ENCODE measurements at regions of chr2 and their contacts with region 1.

Region 1: GRCh38 chr2:185279999-185280398 is 458.6 kb upstream of the FSIP2 start:
- DNase-seq: no peak
- H3K4me3 Mint-ChIP-seq: no peak overlapping the region
- H3K27ac Mint-ChIP-seq: no peak overlapping the region
- H3K4me1 Mint-ChIP-seq: peaks cover 26% of the 10 kb centered on the region
- H3K27me3 Mint-ChIP-seq: no peaks in the 10 kb centered on the region
- CTCF ChIP-seq: peak; percentile 45

Region 2: DNA sequence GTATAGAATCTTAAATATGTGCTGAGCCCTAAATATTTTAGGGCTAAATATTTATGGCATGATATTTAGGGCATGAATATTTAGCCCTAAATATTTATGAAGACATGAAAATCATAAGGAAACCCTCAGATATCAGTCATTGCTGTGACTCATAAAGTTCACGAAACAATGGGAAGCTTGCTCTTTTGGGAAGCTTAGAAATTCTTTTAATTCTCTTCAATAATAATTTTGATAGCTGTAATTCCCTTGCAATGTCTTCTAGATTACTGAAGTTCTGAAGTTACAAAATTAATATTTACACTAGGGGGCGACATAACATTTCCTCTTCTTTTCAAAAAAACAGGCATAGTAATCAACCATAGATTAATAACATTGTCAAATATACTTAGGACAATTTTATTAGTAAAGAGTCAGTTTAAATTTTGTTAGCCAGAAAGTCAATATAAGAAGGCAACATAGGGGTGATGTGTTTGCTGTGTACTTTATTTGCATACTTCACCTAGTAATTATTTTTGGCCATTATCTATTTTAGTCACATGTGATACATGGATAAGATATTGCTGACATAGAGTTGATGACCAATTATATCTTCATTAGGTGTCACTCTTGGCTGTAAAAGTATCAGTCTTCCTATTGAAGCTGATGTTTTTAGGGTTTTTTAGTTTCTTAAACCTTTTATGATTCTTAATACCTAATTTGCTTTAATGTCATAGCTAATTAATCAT is 668.5 kb before region 1 on chr2:
- CTCF ChIA-PET with region 1: no interaction called
- intact Hi-C with region 1: loop called (anchors 1 kb)
- DNase-seq: no peak
- H3K4me3 Mint-ChIP-seq: no peak overlapping the region
- H3K27ac Mint-ChIP-seq: no peak overlapping the region
- H3K4me1 Mint-ChIP-seq: no peaks in the 10 kb centered on the region
- H3K27me3 Mint-ChIP-seq: no peaks in the 10 kb centered on the region
- CTCF ChIP-seq: peak; percentile 54

Region 3: GRCh38 chr2:184646177-184646576 is 633.8 kb before region 1 on chr2:
- CTCF ChIA-PET with region 1: no interaction called
- intact Hi-C with region 1: loop called (anchors 10 kb)
- DNase-seq: peak; percentile 74
- H3K4me3 Mint-ChIP-seq: peak overlapping the region; percentile 46
- H3K27ac Mint-ChIP-seq: peak overlapping the region; percentile 56
- H3K4me1 Mint-ChIP-seq: peaks cover 33% of the 10 kb centered on the region
- H3K27me3 Mint-ChIP-seq: no peaks in the 10 kb centered on the region
- CTCF ChIP-seq: no peak

Region 4: DNA sequence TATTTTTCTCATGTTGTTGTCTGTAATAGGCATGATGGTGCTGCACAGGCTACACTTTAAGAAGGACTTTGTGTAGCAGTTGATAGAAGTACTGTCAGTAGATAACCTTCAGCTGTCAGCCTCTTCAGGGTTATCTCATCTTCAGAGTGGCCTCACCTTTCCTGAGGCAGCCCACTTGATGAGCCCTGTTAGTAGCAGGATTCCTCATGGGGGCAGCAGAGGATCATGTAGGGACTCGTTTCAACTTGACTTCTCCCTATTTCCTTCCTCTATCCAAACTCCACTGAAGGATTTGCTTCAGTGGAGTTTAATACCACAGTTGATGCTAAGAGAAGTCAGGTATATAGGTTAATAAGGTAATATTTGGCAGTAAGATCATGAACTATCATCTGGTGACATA is 71.7 kb before region 1 on chr2:
- CTCF ChIA-PET with region 1: interaction called, 6 read pairs
- intact Hi-C with region 1: loop called (anchors 1 kb)
- DNase-seq: peak; percentile 73
- H3K4me3 Mint-ChIP-seq: no peak overlapping the region
- H3K27ac Mint-ChIP-seq: no peak overlapping the region
- H3K4me1 Mint-ChIP-seq: peaks cover 9% of the 10 kb centered on the region
- H3K27me3 Mint-ChIP-seq: no peaks in the 10 kb centered on the region
- CTCF ChIP-seq: peak; percentile 60

Measured in Calu3 (cell line).